Activated CD4-positive, alpha-beta T cell treated with anti-CD3 and anti-CD28 coated beads, Interleukin-2, amount 10 ng/mL, durations not matched to agents 24 days and 14 days (primary cell): ENCODE measurements at regions of chr3 and their contacts with region 1.

Region 1: GRCh38 chr3:4493014-4493940 is at the start of gene ITPR1:
- DNase-seq: peak; percentile 99
- H3K4me3 Mint-ChIP-seq: peak within 1 kb of the TSS; percentile 92
- H3K27ac Mint-ChIP-seq: peak within 1 kb of the TSS; percentile 91
- H3K4me1 Mint-ChIP-seq: peaks cover 39% of the 10 kb centered on the region
- H3K27me3 Mint-ChIP-seq: peaks cover 33% of the 10 kb centered on the region
- total RNA-seq, gene ITPR1: 84.5 and 85.2 TPM in 2 replicates

Region 2: GRCh38 chr3:3126477-3127431 is 1366.5 kb before region 1 on chr3 and contains the start of gene TRNT1:
- intact Hi-C with region 1: loop called (anchors 5 kb)
- DNase-seq: peak; percentile 99
- H3K4me3 Mint-ChIP-seq: peak within 1 kb of the TSS; percentile 100
- H3K27ac Mint-ChIP-seq: peak within 1 kb of the TSS; percentile 99
- H3K4me1 Mint-ChIP-seq: peaks cover 24% of the 10 kb centered on the region
- H3K27me3 Mint-ChIP-seq: peaks cover 1% of the 10 kb centered on the region
- total RNA-seq, gene TRNT1: 55.7 and 62.4 TPM in 2 replicates

Region 3: DNA sequence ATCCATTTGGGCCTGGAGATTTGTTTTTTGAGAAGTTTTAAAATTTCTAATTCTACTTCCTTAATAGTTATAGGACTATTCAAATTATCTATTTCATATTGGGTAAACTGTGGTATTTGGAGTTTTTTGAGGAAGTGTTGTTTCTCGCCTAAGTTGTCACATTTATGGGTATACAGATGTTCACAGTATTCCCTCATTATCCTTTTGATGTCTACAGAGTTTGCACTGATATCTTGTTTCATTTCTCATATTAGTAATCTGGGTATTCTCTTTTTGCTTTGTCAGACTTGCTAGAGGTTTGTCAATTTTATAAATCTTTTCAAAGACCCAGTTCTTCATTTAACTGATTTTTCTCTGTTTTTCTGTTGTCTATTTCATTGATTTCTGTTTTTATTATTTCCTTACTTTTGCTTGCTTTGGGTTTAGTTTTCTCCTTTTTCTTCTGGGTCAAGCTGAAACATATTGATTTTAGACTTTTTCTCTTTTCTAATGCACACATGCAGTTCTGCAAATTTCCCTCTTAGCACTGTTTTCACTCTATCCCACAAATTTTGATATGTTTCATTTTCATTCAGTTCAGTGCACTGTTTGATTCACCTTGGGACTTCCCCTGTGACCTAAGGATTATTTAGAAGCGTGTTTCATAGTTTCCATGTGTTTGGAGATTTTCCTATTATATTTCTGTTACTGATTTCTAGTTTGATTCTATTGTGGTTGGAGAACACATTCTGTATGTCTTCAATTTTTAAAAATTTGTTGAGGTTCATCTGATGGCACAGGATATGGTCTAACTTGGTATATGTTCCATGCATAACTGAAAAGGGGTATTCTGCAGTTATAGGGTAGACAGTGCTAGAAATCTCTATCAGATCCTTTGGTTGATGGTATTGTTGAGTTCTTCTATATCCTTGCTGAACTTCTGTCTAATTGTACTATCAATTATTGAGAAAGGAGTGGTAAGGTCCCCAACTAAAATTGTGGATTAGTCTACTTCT is 105.8 kb before region 1 on chr3:
- intact Hi-C with region 1: loop called (anchors 1 kb)
- DNase-seq: peak; percentile 48
- H3K4me3 Mint-ChIP-seq: peak overlapping the region; percentile 1
- H3K27ac Mint-ChIP-seq: peak overlapping the region; percentile 84
- H3K4me1 Mint-ChIP-seq: peaks cover 35% of the 10 kb centered on the region
- H3K27me3 Mint-ChIP-seq: no peaks in the 10 kb centered on the region

Region 4: GRCh38 chr3:4466741-4467521 is 26.3 kb before region 1 on chr3 and contains the start of gene SUMF1:
- intact Hi-C with region 1: loop called (anchors 1 kb)
- DNase-seq: peak; percentile 93
- H3K4me3 Mint-ChIP-seq: peak within 1 kb of the TSS; percentile 92
- H3K27ac Mint-ChIP-seq: peak within 1 kb of the TSS; percentile 96
- H3K4me1 Mint-ChIP-seq: peaks cover 12% of the 10 kb centered on the region
- H3K27me3 Mint-ChIP-seq: peaks cover under 1% of the 10 kb centered on the region
- total RNA-seq, gene SUMF1: 6.7 and 7.4 TPM in 2 replicates

Region 5: DNA sequence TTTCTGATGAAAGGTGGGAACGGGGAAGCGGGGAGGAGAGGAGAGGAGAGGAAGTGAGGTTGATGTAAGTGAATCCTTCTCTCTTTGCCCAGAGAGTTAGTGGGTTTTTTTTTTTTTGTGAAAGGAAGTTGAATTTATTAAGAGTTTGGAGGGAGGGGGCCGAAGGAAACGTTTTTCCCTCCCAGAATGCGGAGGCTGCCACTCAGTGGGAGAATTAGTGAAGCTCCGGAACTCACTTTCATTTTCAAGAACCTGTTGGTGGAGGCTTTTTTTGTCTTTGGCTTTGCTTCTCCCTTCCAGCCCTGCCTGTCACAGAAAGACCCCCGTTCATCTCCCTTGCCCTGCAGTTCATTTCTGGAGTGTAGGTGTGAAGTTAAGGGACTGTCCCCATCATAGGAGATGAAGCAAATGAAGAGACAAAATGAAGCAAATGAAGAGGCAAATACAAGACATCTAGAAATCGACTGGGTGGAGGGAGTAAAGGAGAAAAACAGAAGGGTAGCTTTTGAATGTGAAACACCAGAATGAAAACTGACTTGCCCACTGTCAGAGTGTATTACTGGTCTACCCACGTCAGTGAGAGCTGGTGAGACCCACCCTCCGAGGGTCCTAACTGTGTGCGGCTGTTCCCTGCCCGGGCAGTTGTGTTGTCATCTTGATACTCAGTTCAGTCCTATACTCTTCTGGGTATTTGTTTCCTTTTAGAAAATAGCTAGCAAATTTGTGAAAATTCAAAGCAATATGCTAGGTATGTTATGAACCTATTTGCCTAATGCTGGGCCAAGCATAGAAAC is 91.4 kb after region 1 on chr3:
- intact Hi-C with region 1: loop called (anchors 2 kb)
- DNase-seq: peak; percentile 73
- H3K4me3 Mint-ChIP-seq: peak overlapping the region; percentile 82
- H3K27ac Mint-ChIP-seq: peak overlapping the region; percentile 68
- H3K4me1 Mint-ChIP-seq: peaks cover 32% of the 10 kb centered on the region
- H3K27me3 Mint-ChIP-seq: no peaks in the 10 kb centered on the region

Region 6: DNA sequence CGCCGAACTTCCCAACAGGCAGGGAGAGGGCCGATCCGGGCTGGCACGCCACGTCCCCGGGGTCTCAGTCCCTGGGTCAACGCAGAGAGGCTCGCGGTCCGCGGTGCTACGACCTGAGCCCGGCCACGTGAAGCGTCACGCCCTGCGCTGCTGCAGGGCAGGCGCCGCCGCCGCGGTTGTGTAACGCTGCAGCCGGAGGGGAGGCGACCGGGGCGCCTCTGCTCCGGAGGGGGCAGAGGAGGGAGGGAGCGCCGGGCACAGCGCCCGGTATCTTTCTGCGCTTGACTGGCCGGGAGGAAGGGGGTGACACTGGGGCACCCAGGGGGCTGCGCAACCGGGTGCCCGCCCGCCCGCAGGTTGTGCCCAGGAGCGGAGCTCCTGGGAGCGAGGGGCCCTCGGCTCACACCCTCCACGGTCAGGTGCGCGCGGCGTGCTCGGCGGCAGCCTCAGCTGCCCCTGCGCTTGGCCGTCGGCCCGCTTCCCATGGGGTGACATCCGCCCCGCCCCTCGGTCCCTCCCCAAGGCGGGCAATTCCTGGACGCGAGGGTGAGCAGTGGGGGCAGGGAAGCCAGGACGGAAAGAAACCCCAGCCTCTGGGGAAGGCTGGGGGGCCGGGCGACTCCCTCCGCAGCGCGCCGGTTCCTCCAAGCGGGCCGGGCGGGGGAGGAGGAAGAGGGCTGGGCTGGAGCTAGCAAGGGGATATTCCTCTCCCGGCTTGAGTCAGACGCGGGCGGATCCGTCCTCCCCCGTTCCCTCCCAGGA is 485.1 kb after region 1 on chr3:
- intact Hi-C with region 1: loop called (anchors 1 kb)
- DNase-seq: peak; percentile 97
- H3K4me3 Mint-ChIP-seq: peak overlapping the region; percentile 96
- H3K27ac Mint-ChIP-seq: peak overlapping the region; percentile 100
- H3K4me1 Mint-ChIP-seq: peaks cover 33% of the 10 kb centered on the region
- H3K27me3 Mint-ChIP-seq: no peaks in the 10 kb centered on the region